ENCODE measurements at regions of chr20 and their contacts with region 1.

Region 1: DNA sequence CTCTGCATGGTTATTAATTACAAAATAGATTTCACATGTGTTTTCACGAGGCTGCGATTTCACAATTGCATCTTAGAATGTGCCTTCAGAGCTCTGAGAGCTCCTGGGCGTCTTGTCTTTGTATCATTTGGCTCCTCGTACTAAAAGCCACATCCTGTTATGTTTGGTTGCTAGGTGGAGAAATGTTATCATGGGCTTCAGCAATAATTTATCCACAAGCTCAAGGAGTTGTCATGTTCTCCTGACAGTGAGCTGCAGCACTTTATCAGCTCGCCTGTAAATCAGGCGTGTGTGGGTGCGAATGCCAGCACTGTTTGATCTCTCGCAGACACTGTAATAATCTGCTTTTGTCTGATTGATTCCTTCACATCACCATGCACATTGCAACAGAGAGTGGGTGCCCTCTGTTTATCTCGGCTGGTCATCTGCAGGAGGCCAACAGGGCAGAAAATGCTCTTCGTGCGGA is 218.6 kb upstream of the ZFP64 start:
- DNase-seq: peak; percentile 17 to 92 (median 73)
- ATAC-seq: peak; percentile 92
- H3K4me3 Mint-ChIP-seq: peak overlapping the region; percentile 70 to 85 (median 78)
- H3K27ac Mint-ChIP-seq: peak overlapping the region; percentile 96 to 100 (median 98)
- H3K4me1 Mint-ChIP-seq: peaks cover 26 to 83% (median 74%) of the 10 kb centered on the region in 4 donors
- H3K27me3 Mint-ChIP-seq: peaks cover 0 to 1% (median 0%) of the 10 kb centered on the region in 5 donors

Region 2: GRCh38 chr20:52312132-52312729 is 98.0 kb before region 1 on chr20:
- POLR2A ChIA-PET with region 1: interaction called, 13 read pairs
- DNase-seq: peak in 9 of 10 donors; percentile 31 to 80 (median 64)
- ATAC-seq: peak; percentile 79 to 83
- H3K4me3 Mint-ChIP-seq: no peak overlapping the region
- H3K27ac Mint-ChIP-seq: peak overlapping the region in 4 of 10 donors; percentile 3 to 60 (median 11)
- H3K4me1 Mint-ChIP-seq: peaks cover 9 to 30% (median 25%) of the 10 kb centered on the region in 4 donors
- H3K27me3 Mint-ChIP-seq: peaks cover 0 to 1% (median 0%) of the 10 kb centered on the region in 5 donors

Region 3: DNA sequence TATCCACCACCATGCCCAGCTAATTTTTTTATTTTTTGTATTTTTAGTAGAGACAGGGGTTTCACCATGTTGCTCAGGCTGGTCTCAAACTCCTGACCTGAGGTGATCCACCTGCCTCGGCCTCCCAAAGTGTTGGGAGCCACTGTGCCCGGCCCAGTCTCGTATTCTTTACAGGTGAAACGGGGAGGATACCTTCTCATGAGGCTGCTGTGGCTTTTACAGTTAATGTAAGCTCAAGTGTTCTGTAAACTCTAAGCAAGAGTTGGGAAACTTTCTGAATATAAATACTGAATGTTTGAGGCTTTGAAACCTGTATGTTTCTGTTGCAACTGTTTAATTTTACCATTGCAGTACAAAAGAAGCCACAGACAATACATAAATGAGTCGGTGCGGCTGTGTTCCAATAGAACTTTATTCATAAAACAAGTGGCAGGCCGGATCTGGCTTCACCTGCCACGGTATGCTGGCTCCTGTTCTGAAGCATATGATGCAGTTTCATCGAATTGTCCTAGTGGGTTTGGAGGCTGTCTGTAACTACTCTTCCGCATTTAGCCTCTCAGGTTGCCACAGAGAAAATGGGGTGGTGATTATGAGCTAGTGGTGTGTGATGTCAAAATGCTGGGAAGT is 26.1 kb before region 1 on chr20:
- POLR2A ChIA-PET with region 1: interaction called, 21 read pairs
- DNase-seq: no peak
- ATAC-seq: no peak
- H3K4me3 Mint-ChIP-seq: no peak overlapping the region
- H3K27ac Mint-ChIP-seq: peak overlapping the region in 5 of 10 donors; percentile 7 to 82 (median 41)
- H3K4me1 Mint-ChIP-seq: peaks cover 8 to 33% (median 23%) of the 10 kb centered on the region in 4 donors
- H3K27me3 Mint-ChIP-seq: peaks cover 0 to 1% (median 0%) of the 10 kb centered on the region in 5 donors